ENCODE measurements at regions of chr7 and their contacts with region 1.

Region 1: DNA sequence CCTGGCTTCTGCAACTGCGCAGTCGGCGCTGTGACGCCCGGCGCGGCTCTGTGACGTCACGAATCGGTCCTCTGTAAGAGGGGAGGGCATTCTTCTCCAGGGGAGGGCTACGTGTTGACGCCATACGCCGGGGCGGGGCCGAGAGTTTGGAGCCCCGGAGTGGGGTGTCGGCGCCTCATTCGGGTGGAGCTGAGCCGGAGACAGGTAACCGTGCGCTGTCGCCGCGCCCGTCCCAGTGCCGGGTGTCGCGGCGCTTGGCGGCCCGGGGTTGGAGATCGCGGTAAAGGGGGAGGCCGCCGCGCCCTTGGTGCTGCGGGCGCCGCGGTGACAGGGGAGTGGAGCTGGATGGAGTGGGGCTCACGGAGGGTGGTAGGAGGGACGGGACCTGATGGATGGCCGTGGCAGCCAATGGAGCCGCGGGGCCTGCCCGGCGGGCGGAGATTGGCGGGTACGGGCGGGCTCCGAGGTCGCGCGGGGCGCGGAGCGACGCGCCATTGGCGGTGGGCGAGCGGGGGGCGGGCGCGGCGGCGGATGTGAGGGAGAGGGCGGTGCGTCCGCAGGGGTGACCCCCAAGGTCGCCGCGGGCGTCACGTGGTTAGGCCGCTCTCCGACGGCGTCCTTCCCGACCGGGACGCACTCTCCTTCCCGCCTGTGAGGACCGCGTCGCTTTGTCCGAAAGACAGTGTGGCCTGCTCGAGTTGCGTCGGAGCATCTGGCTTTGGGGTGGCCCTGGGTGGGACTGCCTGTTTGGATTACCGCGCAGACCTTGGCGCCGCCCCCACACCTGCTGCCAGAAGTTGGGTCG is at the start of gene OGDH:
- DNase-seq: peak; percentile 87
- ATAC-seq: peak; percentile 98
- H3K4me3 ChIP-seq: peak within 1 kb of the TSS; percentile 91
- H3K27ac ChIP-seq: peak within 1 kb of the TSS; percentile 93
- H3K4me1 ChIP-seq: peaks cover 19% of the 10 kb centered on the region
- H3K27me3 ChIP-seq: no peaks in the 10 kb centered on the region
- CTCF ChIP-seq: no peak
- EP300 ChIP-seq: peak in 1 of 2 experiments; percentile 12; a peak in 1 of 4 replicates
- POLR2A ChIP-seq: peak; percentile 95
- RAD21 ChIP-seq: no peak
- polyA plus RNA-seq, gene OGDH: 4.1 to 4.2 TPM

Region 2: GRCh38 chr7:44581879-44582603 is 24.6 kb before region 1 on chr7 and contains the start of gene TMED4:
- CTCF ChIA-PET with region 1: no interaction called
- POLR2A ChIA-PET with region 1: interaction called, 16 read pairs
- RAD21 ChIA-PET with region 1: interaction called, 8 read pairs
- SMC1A ChIA-PET with region 1: interaction called, 10 read pairs
- in situ Hi-C with region 1: no loop called
- intact Hi-C with region 1: no loop called
- DNase-seq: peak; percentile 97
- ATAC-seq: peak; percentile 92
- H3K4me3 ChIP-seq: peak within 1 kb of the TSS; percentile 83
- H3K27ac ChIP-seq: peak within 1 kb of the TSS; percentile 86
- H3K4me1 ChIP-seq: peaks cover 4% of the 10 kb centered on the region; the same call in 1 of the 2 replicates
- H3K27me3 ChIP-seq: no peaks in the 10 kb centered on the region
- CTCF ChIP-seq: no peak
- EP300 ChIP-seq: no peak
- POLR2A ChIP-seq: peak; percentile 98
- RAD21 ChIP-seq: no peak
- polyA plus RNA-seq, gene TMED4: 20.8 to 21.0 TPM

Region 3: DNA sequence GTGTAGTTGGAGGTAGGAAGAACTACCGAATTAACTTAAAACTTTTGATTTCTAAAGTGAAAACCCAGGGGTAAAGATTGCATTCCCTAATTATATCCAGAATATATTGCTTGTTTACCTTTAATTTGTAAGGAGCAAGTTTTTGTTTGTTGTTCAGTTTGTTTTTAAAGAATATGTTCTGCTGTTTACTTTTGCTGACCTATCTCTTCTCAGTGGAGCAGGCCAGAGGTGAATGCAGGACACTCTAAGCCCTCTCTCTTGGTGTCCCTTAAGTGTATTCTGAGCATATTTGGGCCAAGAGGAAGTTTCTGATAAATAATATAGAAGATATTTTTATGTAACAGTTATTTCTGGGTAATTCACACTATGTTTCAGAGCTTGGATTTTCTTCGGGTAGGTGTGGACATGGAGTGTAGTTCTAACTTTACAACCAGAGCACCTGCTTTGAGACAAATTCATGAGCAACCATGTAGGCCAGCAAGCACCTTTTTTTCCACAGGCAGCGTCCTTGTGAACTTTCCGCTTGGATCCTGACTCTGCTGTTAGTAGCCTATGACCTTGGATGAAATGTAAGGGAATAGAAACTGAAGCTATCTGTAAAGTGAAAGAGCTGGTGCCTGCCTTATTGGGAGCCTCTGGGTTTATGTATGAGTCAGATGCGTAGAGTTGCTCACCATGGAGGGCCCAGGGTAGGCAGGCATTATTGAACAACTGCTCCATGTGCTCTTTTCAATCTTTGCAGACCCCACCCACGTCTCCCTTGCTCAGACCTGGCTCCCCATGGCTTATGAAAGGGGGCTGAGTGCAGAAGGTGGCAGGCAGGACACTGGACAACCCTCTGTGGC is 15.9 kb after region 1 on chr7:
- CTCF ChIA-PET with region 1: interaction called, 6 read pairs
- POLR2A ChIA-PET with region 1: interaction called, 35 read pairs
- RAD21 ChIA-PET with region 1: interaction called, 15 read pairs
- SMC1A ChIA-PET with region 1: interaction called, 8 read pairs
- in situ Hi-C with region 1: no loop called
- intact Hi-C with region 1: no loop called
- DNase-seq: no peak
- ATAC-seq: peak; percentile 91
- H3K4me3 ChIP-seq: peak overlapping the region; percentile 44
- H3K27ac ChIP-seq: peak overlapping the region; percentile 90
- H3K4me1 ChIP-seq: peaks cover 49% of the 10 kb centered on the region
- H3K27me3 ChIP-seq: no peaks in the 10 kb centered on the region
- CTCF ChIP-seq: no peak
- EP300 ChIP-seq: no peak
- POLR2A ChIP-seq: 0 out of 2 replicates have a peak, but pooled peaks have one; percentile 22
- RAD21 ChIP-seq: no peak

Region 4: GRCh38 chr7:44633254-44634186 is 26.9 kb after region 1 on chr7:
- CTCF ChIA-PET with region 1: interaction called, 13 read pairs
- POLR2A ChIA-PET with region 1: interaction called, 95 read pairs
- RAD21 ChIA-PET with region 1: interaction called, 36 read pairs
- SMC1A ChIA-PET with region 1: interaction called, 103 read pairs
- in situ Hi-C with region 1: no loop called
- intact Hi-C with region 1: loop called (anchors 1 kb)
- DNase-seq: peak; percentile 88
- ATAC-seq: peak; percentile 71
- H3K4me3 ChIP-seq: peak overlapping the region; percentile 39
- H3K27ac ChIP-seq: peak overlapping the region; percentile 68
- H3K4me1 ChIP-seq: peaks cover 87% of the 10 kb centered on the region
- H3K27me3 ChIP-seq: no peaks in the 10 kb centered on the region
- CTCF ChIP-seq: no peak
- EP300 ChIP-seq: peak; percentile 58 to 78; a peak in 3 of 4 replicates
- POLR2A ChIP-seq: peak; percentile 35; the same call in 1 of the 2 replicates
- RAD21 ChIP-seq: peak; percentile 26; the same call in 1 of the 2 replicates

Region 5: DNA sequence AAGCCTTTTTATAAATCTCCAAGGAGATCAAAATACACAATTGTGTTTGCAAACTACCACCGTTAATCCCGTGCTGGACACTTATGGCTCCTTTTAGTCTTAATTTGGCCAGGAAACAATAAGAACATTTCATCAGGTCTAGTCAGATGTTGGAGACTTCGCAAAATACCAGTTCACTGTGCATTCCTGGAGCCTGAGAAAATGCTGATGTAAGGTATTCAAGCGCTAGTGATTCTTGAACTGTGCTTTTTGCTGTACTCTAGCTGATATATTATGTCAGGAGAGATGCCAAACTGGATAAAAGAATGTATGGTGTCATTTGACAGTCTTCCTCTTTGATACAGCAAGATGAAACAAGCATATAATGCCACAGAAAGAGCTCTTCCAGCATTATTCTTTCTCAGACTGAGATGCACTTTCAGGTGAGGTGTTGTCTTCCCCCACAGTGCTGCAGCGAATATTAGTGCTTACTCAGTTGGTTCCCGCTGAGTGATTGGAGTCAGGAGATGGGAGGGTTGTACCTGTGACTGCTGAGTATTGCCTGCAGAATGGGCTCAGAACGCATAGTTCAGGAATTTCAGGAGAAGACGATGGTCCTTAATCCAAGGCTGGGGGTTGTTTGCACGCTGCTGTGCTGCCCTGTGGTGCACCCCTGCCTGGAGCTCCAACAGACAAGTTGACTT is 59.0 kb after region 1 on chr7:
- CTCF ChIA-PET with region 1: no interaction called
- POLR2A ChIA-PET with region 1: no interaction called
- RAD21 ChIA-PET with region 1: no interaction called
- SMC1A ChIA-PET with region 1: no interaction called
- in situ Hi-C with region 1: no loop called
- intact Hi-C with region 1: no loop called
- DNase-seq: no peak
- ATAC-seq: no peak
- H3K4me3 ChIP-seq: no peak overlapping the region
- H3K27ac ChIP-seq: no peak overlapping the region
- H3K4me1 ChIP-seq: peaks cover 3% of the 10 kb centered on the region; the same call in 1 of the 2 replicates
- H3K27me3 ChIP-seq: no peaks in the 10 kb centered on the region
- CTCF ChIP-seq: no peak
- EP300 ChIP-seq: no peak
- POLR2A ChIP-seq: no peak
- RAD21 ChIP-seq: no peak